ENCODE measurements at regions of chr19 and their contacts with region 1.

Region 1: GRCh38 chr19:47742634-47743033 is 2.7 kb upstream of the NOP53 start:
- DNase-seq: no peak

Region 2: GRCh38 chr19:47713046-47714021 is 29.3 kb before region 1 on chr19 and contains the start of gene EHD2:
- intact Hi-C with region 1: loop called (anchors 1 kb)
- DNase-seq: peak; percentile 80
- total RNA-seq, gene EHD2: 42.6 TPM

Region 3: DNA sequence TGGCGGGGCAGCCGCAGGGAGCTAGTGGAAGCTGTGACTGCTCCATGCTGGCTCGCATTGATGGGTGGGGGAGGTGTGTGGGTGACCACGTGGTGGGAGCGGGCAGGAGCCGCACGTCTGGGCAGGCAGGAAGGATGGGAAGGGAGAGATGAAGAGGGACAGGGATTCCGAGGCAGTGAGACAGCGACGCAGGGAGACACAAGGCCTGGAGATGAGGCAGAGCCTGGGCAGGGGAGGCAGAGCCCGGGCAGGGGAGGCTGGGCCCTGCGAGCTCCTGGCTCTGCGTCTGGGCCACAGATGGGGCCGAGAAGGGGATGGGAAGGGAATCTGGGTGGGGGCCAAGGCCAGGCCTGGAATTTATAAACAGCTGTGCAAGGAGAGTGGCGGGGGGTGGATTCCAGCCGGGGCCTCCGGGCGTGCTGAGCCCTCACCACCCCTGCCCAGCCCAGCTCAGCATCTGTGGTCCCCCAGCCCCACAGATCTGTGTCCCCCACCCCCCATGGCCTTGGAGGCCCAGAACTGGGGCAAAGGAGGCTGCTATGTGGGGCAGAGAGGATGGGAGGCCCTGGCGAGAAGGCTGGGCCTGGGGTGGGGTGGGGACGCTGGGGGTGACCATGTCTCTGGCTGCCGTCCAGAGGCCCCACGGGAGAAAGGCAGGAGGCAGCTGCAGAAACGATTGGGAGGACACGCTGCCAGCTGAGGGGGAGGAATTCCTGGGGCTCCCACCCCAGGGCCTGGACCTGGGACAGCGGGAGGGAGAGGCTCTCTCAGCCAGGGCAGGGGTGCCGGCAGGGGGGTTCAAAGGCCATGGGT is 23.4 kb before region 1 on chr19:
- intact Hi-C with region 1: loop called (anchors 1 kb)
- DNase-seq: peak; percentile 89

Region 4: DNA sequence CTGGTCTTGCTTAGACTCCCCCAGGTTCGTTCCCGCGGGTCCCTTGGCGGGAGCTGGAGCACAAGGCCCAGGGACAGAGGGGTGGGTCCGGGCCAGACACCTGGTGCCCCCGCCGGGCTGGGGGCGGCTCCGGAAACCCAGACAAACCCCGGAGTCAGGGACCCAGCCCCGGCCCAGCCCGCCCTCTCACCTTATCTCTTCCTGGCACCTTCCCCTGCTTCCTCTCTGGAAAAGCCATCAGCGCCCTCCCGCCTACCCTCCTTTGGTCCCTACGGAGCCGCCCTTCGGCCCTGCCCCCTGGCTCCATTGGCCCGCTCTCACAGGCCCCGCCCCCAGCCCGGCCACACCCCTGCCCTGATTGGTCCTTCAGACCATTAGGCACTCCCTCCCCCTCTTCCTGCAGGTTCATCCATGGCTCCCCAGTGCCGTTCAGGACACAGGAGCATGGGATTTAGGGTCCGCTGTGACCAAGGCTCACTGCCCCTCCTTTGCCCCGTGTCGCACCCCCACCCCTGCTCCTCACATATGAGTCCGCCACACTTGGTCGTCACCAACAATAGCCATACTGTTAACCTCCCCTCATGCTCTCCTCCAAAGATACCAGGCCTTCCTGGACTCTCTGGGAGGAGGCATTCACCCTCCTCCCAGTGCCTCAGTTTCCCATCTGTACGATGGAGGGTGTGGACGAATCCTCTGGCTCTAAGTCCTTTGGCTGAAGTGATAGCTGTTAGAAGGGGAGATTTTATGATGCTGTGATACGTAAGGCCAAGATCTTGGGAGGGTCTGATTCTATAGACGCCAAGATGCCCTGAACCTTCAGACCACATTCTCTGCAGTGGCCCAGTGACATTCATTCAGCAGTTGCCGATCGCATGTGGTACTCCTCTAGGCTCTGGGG is 12.4 kb before region 1 on chr19:
- intact Hi-C with region 1: loop called (anchors 1 kb)
- DNase-seq: peak; percentile 87